Activated CD4-positive, alpha-beta T cell treated with anti-CD3 and anti-CD28 coated beads, Interleukin-2, amount 10 ng/mL, durations not matched to agents 24 days and 14 days (primary cell): ENCODE measurements at regions of chr15 and their contacts with region 1.

Region 1: DNA sequence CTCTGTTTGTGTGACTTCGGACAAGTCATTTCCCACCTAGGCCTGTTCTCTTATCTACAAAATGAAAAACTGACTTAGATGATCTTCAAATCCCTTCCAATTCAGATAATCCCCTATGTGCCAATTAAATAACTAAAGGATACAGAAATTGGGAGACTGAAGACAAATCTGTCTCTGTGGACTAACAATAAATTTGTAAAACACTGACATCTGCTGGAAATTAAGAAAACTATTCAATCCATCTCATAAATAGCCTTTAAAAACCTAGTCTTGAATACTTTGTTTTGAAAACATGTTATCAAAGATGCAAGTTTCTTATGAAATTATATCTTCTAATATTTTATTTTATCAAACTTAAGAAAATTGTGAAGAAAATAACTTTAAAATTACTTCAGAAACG is 38.3 kb downstream of the MTHFS start:
- DNase-seq: no peak
- H3K4me3 Mint-ChIP-seq: no peak overlapping the region
- H3K27ac Mint-ChIP-seq: no peak overlapping the region
- H3K4me1 Mint-ChIP-seq: peaks cover 7% of the 10 kb centered on the region
- H3K27me3 Mint-ChIP-seq: no peaks in the 10 kb centered on the region

Region 2: GRCh38 chr15:79380755-79381497 is 477.5 kb before region 1 on chr15:
- intact Hi-C with region 1: loop called (anchors 5 kb)
- DNase-seq: peak; percentile 91
- H3K4me3 Mint-ChIP-seq: no peak overlapping the region
- H3K27ac Mint-ChIP-seq: no peak overlapping the region
- H3K4me1 Mint-ChIP-seq: no peaks in the 10 kb centered on the region
- H3K27me3 Mint-ChIP-seq: no peaks in the 10 kb centered on the region

Region 3: GRCh38 chr15:79872358-79873017 is 14.0 kb after region 1 on chr15:
- intact Hi-C with region 1: no loop called
- DNase-seq: peak; percentile 83
- H3K4me3 Mint-ChIP-seq: no peak overlapping the region
- H3K27ac Mint-ChIP-seq: peak overlapping the region; percentile 51
- H3K4me1 Mint-ChIP-seq: peaks cover 13% of the 10 kb centered on the region
- H3K27me3 Mint-ChIP-seq: no peaks in the 10 kb centered on the region